ENCODE measurements at regions of chr5 and their contacts with region 1.

Region 1: DNA sequence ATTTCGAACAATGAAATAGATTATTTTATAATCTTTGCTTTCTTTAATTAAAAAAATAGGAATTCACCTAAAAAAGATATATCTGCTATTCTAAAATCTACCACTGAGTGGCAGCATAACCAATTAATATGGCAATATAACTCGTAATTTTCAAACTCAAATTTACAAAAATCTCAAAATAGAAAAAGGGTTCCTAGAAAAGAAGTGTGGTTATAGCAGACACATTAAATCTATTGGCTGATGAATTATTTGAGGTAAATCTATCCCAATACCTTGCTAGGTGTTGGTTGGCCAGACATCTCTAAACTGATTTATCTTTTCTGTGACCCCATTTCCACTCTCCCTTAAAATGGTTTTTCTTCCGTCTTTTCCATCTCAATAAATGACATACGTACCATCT is 30.2 kb upstream of the NRG2 start:
- DNase-seq: no peak
- H3K4me3 Mint-ChIP-seq: no peak overlapping the region
- H3K27ac Mint-ChIP-seq: no peak overlapping the region
- H3K4me1 Mint-ChIP-seq: no peaks in the 10 kb centered on the region
- H3K27me3 Mint-ChIP-seq: peaks cover 3% of the 10 kb centered on the region

Region 2: DNA sequence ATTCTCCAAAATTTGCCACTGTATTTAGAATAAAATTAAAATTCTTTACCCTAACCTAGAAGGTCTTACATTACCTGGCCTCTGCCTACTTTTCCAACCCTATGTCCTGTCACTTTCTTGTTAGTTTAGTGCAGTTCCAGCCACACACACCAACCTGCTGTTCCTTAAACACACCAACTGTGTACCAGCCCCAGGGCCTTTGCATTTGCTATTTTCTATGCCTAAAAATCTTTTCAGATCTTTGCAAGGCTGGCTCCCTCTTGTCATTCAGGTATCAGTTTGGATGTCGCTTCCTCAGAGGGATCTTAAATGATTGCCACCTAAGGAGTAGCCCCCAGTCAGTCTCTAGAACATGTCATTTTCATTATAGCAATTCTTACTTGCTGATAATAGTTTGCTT is 12.5 kb before region 1 on chr5:
- CTCF ChIA-PET with region 1: interaction called, 10 read pairs
- intact Hi-C with region 1: no loop called
- DNase-seq: no peak
- H3K4me3 Mint-ChIP-seq: no peak overlapping the region
- H3K27ac Mint-ChIP-seq: no peak overlapping the region
- H3K4me1 Mint-ChIP-seq: no peaks in the 10 kb centered on the region
- H3K27me3 Mint-ChIP-seq: peaks cover 15% of the 10 kb centered on the region

Region 3: DNA sequence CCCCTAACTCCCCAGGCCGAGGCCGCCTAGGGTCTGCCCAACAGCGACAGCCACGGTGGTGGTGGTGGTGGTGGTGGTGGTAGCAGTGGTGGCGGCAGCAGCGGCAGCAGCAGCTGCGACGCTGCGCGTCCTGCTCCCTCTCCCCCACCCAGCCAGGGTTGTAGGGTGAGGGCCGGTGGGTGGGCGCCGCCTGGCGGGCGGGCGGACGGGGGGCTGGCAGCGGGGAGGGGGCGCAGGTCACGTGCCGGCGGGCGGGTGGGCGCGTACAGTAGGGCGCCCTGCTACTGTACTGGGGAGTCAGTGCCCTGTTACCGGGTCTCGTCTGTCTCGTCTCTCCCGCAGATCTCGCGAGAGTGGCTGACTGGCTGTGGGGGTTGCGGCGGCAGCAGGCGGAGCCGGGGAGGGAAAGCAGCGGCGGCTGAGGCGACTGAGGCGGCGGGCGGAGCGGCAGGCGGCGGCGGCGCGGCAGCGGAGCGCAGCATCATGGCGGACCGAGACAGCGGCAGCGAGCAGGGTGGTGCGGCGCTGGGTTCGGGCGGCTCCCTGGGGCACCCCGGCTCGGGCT is 40.5 kb after region 1 on chr5 and contains the start of gene PURA:
- CTCF ChIA-PET with region 1: interaction called, 11 read pairs
- intact Hi-C with region 1: no loop called
- DNase-seq: peak; percentile 98
- H3K4me3 Mint-ChIP-seq: peak within 1 kb of the TSS; percentile 91
- H3K27ac Mint-ChIP-seq: peak within 1 kb of the TSS; percentile 90
- H3K4me1 Mint-ChIP-seq: peaks cover 66% of the 10 kb centered on the region
- H3K27me3 Mint-ChIP-seq: no peaks in the 10 kb centered on the region
- total RNA-seq, gene PURA: 9.0 to 10.3 TPM

Region 4: GRCh38 chr5:140140435-140140834 is 67.1 kb after region 1 on chr5:
- CTCF ChIA-PET with region 1: interaction called, 80 read pairs
- intact Hi-C with region 1: loop called (anchors 1 kb)
- DNase-seq: no peak
- H3K4me3 Mint-ChIP-seq: no peak overlapping the region
- H3K27ac Mint-ChIP-seq: no peak overlapping the region
- H3K4me1 Mint-ChIP-seq: peaks cover 9% of the 10 kb centered on the region
- H3K27me3 Mint-ChIP-seq: peaks cover 8% of the 10 kb centered on the region

Region 5: GRCh38 chr5:140157032-140157803 is 83.9 kb after region 1 on chr5:
- CTCF ChIA-PET with region 1: interaction called, 43 read pairs
- intact Hi-C with region 1: loop called (anchors 1 kb)
- DNase-seq: peak; percentile 94
- H3K4me3 Mint-ChIP-seq: peak overlapping the region; percentile 42
- H3K27ac Mint-ChIP-seq: no peak overlapping the region
- H3K4me1 Mint-ChIP-seq: peaks cover 4% of the 10 kb centered on the region
- H3K27me3 Mint-ChIP-seq: no peaks in the 10 kb centered on the region

Measured in activated naive CD4-positive, alpha-beta T cell treated with anti-CD3 and anti-CD28 coated beads for 36 hours (primary cell).